ENCODE measurements at regions of chr7 and their contacts with region 1.

Region 1: DNA sequence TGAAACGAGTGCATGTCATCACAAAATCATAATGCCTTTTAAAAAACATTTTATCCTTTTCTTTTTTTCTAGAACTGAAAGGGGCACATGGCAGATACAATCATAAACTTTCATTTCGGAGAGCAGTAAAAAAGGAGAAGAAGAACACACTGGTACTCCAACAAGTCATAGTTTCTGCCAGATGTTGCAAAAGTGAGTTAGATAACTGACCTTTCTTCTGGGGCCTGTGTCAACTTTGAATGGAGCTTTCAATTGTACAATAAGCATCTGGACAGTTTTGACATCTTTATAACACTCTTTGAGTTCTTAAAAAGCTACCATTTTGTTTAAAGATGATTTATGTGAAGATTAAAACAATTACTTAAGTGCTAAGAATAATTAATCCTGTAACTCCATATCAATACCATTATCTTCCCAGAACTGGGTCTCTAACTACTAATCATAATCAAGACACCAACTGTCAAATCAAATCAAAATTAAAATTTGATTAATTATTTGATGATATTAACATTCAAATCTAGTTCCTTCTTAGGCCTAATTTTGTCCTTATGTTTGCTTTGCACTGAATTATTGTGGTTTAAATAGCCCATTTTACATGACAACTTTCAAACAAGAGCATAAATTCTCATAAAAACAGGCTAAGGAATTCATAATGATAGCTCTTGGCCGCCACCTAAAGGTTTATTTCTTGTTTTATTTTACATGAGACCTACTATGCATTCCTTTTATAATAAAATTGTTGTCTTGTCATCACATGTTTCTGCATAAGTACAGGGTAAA is 19.5 kb upstream of the ITGB8 start:
- DNase-seq: peak; percentile 50
- H3K4me3 Mint-ChIP-seq: no peak overlapping the region
- H3K27ac Mint-ChIP-seq: peak overlapping the region; percentile 30
- H3K4me1 Mint-ChIP-seq: peaks cover 42% of the 10 kb centered on the region
- H3K27me3 Mint-ChIP-seq: no peaks in the 10 kb centered on the region
- CTCF ChIP-seq: peak; percentile 71

Region 2: DNA sequence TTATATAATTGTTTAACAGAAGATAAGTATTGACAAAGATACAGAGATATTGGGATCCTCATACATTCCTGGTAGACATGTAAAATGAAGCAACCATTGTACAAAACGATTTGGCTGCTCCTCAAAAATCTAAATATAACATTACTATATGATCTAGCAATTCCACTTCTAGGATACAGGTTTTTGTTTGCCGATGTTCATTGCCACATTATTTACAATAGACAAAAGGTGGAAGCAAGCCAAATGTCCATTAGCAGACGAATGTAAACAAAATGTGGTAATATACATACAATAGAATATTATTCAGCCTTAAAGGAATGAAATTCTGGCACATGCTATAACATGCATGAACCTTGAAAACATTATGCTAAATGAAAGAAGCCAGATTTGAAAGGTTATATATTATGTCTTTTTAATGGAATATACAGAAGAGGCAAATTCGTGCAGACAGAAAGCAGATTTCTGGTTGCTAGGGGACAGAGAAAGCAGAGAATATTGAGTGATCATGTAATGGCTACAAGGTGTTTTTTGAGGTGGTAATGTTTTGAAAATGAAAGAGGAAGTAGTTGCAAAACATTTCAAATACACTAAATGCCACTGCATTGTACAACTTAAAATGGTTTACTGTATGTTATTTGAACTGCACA is 647.2 kb before region 1 on chr7:
- CTCF ChIA-PET with region 1: no interaction called
- intact Hi-C with region 1: no loop called
- DNase-seq: no peak
- H3K4me3 Mint-ChIP-seq: peak overlapping the region; percentile 4
- H3K27ac Mint-ChIP-seq: peak overlapping the region; percentile 2
- H3K4me1 Mint-ChIP-seq: peaks cover 20% of the 10 kb centered on the region
- H3K27me3 Mint-ChIP-seq: no peaks in the 10 kb centered on the region
- CTCF ChIP-seq: no peak

Region 3: DNA sequence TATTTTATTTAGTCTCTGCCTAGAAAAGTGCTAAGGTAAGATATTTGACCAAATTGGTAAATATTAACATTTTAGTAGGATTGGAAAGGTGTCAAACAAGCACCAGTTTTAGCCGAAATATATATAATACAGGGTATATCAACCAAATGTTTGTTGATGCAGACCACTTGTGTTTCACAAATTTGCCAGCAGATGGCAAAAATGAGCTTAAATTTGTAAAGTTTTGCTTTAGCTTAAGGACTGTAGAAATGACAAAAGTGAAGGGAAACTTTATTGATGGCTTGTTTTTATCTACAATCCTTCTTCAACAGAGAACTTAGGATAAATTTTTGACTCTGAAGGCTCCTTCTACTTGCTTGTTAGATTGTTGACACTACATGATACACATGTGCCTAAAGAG is 597.5 kb before region 1 on chr7:
- CTCF ChIA-PET with region 1: interaction called, 9 read pairs
- intact Hi-C with region 1: loop called (anchors 5 kb)
- DNase-seq: peak; percentile 66
- H3K4me3 Mint-ChIP-seq: no peak overlapping the region
- H3K27ac Mint-ChIP-seq: no peak overlapping the region
- H3K4me1 Mint-ChIP-seq: peaks cover 31% of the 10 kb centered on the region
- H3K27me3 Mint-ChIP-seq: no peaks in the 10 kb centered on the region
- CTCF ChIP-seq: peak; percentile 53

Region 4: DNA sequence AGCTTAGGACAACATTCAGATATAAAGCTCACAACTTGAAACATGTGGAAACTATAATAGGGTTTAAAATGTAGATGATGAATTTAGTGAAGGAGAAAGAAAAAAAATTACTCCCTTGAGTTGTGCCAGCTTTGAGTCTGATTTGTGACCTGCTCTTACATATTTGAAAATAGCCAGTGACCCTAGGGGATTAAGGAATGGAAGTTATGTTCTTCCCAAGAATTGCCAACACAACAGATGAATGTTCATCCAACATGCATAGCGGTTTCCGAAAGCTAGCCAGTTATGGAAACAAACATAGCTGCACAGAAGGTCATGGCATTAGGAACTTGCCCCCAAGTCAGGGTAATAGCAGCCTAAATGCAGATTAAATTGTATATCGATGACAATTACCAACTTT is 548.5 kb before region 1 on chr7:
- CTCF ChIA-PET with region 1: no interaction called
- intact Hi-C with region 1: no loop called
- DNase-seq: no peak
- H3K4me3 Mint-ChIP-seq: no peak overlapping the region
- H3K27ac Mint-ChIP-seq: no peak overlapping the region
- H3K4me1 Mint-ChIP-seq: no peaks in the 10 kb centered on the region
- H3K27me3 Mint-ChIP-seq: no peaks in the 10 kb centered on the region
- CTCF ChIP-seq: no peak

Region 5: DNA sequence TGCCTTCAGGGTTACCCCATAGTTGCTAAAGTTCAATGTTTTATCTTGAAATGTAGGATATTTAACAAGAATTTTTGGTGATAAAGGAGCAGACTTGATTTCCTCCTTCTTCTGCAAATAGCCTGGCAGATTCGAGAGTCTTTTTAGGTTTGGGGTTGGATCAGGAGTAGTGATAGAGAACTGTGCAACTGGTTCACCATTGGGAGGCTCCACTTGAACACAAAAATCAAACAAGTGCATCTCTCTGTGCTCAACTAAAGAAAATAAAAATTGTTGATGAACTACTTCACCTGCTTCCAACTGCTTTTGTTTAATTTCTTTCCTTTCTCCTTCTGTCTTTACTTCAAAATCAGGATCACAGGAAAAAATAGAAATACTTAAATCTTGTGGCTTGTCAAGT is 152.5 kb before region 1 on chr7:
- CTCF ChIA-PET with region 1: interaction called, 4 read pairs
- intact Hi-C with region 1: loop called (anchors 1 kb)
- DNase-seq: peak; percentile 20
- H3K4me3 Mint-ChIP-seq: no peak overlapping the region
- H3K27ac Mint-ChIP-seq: peak overlapping the region; percentile 48
- H3K4me1 Mint-ChIP-seq: peaks cover 24% of the 10 kb centered on the region
- H3K27me3 Mint-ChIP-seq: no peaks in the 10 kb centered on the region
- CTCF ChIP-seq: no peak

Region 6: GRCh38 chr7:20172736-20173334 is 138.3 kb before region 1 on chr7:
- CTCF ChIA-PET with region 1: interaction called, 3 read pairs
- intact Hi-C with region 1: loop called (anchors 5 kb)
- DNase-seq: peak; percentile 81
- H3K4me3 Mint-ChIP-seq: no peak overlapping the region
- H3K27ac Mint-ChIP-seq: no peak overlapping the region
- H3K4me1 Mint-ChIP-seq: peaks cover 22% of the 10 kb centered on the region
- H3K27me3 Mint-ChIP-seq: no peaks in the 10 kb centered on the region
- CTCF ChIP-seq: peak; percentile 78

Region 7: GRCh38 chr7:20199015-20199737 is 112.0 kb before region 1 on chr7:
- CTCF ChIA-PET with region 1: interaction called, 3 read pairs
- intact Hi-C with region 1: loop called (anchors 1 kb)
- DNase-seq: peak; percentile 93
- H3K4me3 Mint-ChIP-seq: peak overlapping the region; percentile 37
- H3K27ac Mint-ChIP-seq: peak overlapping the region; percentile 79
- H3K4me1 Mint-ChIP-seq: peaks cover 73% of the 10 kb centered on the region
- H3K27me3 Mint-ChIP-seq: no peaks in the 10 kb centered on the region
- CTCF ChIP-seq: no peak

Region 8: DNA sequence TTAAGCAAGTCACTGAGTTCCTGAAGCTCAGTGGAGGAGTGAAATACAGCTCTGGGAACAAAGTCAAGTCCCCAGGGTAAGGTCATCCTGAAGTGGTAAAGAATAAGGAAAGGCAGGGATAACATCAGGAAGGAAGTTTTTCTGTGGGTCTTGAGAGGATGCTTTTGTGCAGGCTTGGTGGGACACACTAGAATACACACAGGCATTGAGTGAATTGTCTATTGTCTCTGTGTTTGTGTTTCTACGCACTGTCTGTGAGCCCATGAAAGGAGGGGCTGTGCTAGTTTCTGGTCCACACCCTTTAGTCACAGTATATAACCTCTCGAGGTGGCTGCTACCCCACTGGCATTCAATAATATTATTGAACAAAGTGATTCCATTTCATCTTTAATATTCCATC is 208.5 kb after region 1 on chr7:
- CTCF ChIA-PET with region 1: no interaction called
- intact Hi-C with region 1: no loop called
- DNase-seq: no peak
- H3K4me3 Mint-ChIP-seq: no peak overlapping the region
- H3K27ac Mint-ChIP-seq: no peak overlapping the region
- H3K4me1 Mint-ChIP-seq: no peaks in the 10 kb centered on the region
- H3K27me3 Mint-ChIP-seq: no peaks in the 10 kb centered on the region
- CTCF ChIP-seq: no peak